IMR-90 (cell line): ENCODE measurements at regions of chr3 and their contacts with region 1.

Region 1: GRCh38 chr3:114627770-114628169 is 333.9 kb downstream of the TIGIT start:
- DNase-seq: peak; percentile 43
- ATAC-seq: peak; percentile 3
- H3K4me3 ChIP-seq: no peak overlapping the region
- H3K27ac ChIP-seq: no peak overlapping the region
- H3K4me1 ChIP-seq: peaks cover 12% of the 10 kb centered on the region
- H3K27me3 ChIP-seq: no peaks in the 10 kb centered on the region
- CTCF ChIP-seq: no peak
- POLR2A ChIP-seq: no peak
- RAD21 ChIP-seq: no peak

Region 2: DNA sequence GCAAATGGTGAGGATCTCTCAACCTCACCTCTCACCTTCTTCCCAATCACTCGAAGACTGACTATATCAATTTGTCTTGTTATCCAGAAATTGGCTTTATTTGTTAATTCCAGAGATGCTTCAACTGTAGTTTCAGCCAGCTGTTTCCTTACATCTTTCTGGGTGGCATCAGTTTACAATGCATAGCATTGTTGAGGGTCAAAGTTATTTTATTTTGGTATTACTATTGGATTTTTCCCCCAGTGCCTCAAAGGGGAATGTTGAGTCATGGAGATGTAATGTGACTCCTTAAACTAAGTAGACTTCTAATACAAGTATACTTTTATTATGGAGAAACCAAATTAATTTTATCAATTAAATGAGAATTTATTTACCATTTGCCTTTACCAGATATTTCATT is 17.6 kb after region 1 on chr3:
- CTCF ChIA-PET with region 1: no interaction called
- POLR2A ChIA-PET with region 1: no interaction called
- dilution Hi-C with region 1: no loop called
- in situ Hi-C with region 1: no loop called
- intact Hi-C with region 1: loop called (anchors 2 kb)
- DNase-seq: peak; percentile 58
- ATAC-seq: peak; percentile 82
- H3K4me3 ChIP-seq: no peak overlapping the region
- H3K27ac ChIP-seq: no peak overlapping the region
- H3K4me1 ChIP-seq: peaks cover 2% of the 10 kb centered on the region; the same call in 1 of the 2 replicates
- H3K27me3 ChIP-seq: no peaks in the 10 kb centered on the region
- CTCF ChIP-seq: no peak
- POLR2A ChIP-seq: no peak
- RAD21 ChIP-seq: no peak